BJ (cell line): ENCODE measurements at regions of chr12 and their contacts with region 1.

Region 1: GRCh38 chr12:132824053-132824452 is 4.6 kb downstream of the GOLGA3 start:
- DNase-seq: no peak
- H3K4me3 ChIP-seq: no peak overlapping the region
- H3K27me3 ChIP-seq: no peaks in the 10 kb centered on the region
- CTCF ChIP-seq: no peak

Region 2: GRCh38 chr12:132700212-132700822 is 123.7 kb before region 1 on chr12:
- CTCF ChIA-PET with region 1: no interaction called
- POLR2A ChIA-PET with region 1: no interaction called
- DNase-seq: peak; percentile 8
- H3K4me3 ChIP-seq: no peak overlapping the region
- H3K27me3 ChIP-seq: no peaks in the 10 kb centered on the region
- CTCF ChIP-seq: no peak

Region 3: DNA sequence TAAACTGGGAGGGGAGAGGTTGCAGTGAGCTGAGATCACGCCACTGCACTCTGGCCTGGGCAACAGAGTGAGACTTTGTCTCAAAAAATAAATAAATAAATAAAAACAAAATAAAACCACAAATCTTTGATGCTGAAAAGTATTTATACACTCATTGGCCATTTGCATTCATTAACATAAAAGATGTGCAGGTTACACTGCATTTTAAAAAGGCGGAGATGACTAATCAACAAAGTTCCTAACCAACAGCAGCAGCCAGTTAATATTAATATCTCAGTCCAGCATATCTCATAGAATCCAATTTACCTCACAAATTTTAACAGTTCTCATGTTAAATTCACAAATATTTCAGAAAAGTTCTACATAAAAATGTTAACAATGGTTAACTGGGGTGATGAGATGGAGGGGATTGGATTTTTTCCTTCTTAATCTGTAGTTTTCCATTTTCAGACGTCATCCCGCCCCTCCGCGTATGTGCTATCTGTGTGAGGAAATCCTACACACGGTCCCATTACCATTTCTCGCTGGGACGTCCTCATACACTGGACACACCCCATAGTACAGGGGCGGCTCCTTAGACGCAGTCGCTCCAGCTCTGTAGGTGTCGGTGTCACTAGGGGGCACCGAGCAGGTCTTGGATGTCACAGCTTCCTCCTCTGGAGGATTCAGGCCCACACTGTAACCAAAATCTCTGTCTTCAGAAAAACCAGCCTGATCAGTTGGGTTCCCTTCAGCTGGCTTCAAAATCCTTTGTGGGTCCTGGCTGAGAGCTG is 69.7 kb before region 1 on chr12:
- CTCF ChIA-PET with region 1: no interaction called
- POLR2A ChIA-PET with region 1: no interaction called
- DNase-seq: no peak
- H3K4me3 ChIP-seq: no peak overlapping the region
- H3K27me3 ChIP-seq: no peaks in the 10 kb centered on the region
- CTCF ChIP-seq: no peak

Region 4: GRCh38 chr12:132887513-132888351 is 63.7 kb after region 1 on chr12 and contains the start of gene CHFR:
- CTCF ChIA-PET with region 1: no interaction called
- POLR2A ChIA-PET with region 1: no interaction called
- DNase-seq: peak; percentile 91
- H3K4me3 ChIP-seq: peak within 1 kb of the TSS; percentile 92
- H3K27me3 ChIP-seq: no peaks in the 10 kb centered on the region
- CTCF ChIP-seq: no peak
- polyA plus RNA-seq, gene CHFR: 29.5 and 41.6 TPM in 2 replicates

Region 5: GRCh38 chr12:132956011-132956788 is 132.1 kb after region 1 on chr12 and contains the start of gene ZNF605:
- CTCF ChIA-PET with region 1: no interaction called
- POLR2A ChIA-PET with region 1: interaction called, 10 read pairs
- DNase-seq: peak; percentile 31
- H3K4me3 ChIP-seq: peak within 1 kb of the TSS; percentile 75
- H3K27me3 ChIP-seq: no peaks in the 10 kb centered on the region
- CTCF ChIP-seq: no peak
- polyA plus RNA-seq, gene ZNF605: 4.7 and 8.7 TPM in 2 replicates